Mammary epithelial cell (primary cell): ENCODE measurements at regions of chrX and their contacts with region 1.

Region 1: DNA sequence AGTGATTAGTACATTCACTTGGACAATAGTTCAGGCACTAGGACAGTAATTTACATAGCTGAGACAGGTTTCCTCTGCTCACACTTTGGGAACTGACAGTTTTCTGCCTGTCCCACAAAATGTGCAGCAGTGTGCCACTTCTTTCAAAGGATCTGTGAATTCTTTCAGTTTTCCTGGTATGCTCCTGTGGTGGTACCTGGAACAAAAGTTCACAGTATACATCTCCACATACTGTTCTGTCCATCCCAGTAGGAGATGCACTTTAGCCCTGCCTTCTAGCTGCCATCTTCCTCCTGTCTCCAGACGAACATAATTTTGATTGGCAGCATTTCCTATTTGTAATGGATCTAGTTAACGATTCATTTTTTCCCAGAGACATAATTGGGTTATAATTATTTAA is 360.8 kb upstream of the CXorf51B start:
- DNase-seq: no peak
- H3K4me3 ChIP-seq: no peak overlapping the region
- H3K27ac ChIP-seq: no peak overlapping the region
- H3K4me1 ChIP-seq: no peaks in the 10 kb centered on the region
- H3K27me3 ChIP-seq: no peaks in the 10 kb centered on the region
- CTCF ChIP-seq: no peak

Region 2: GRCh38 chrX:144681501-144681900 is 1767.3 kb before region 1 on chrX:
- CTCF ChIA-PET with region 1: interaction called, 13 read pairs
- dilution Hi-C with region 1: no loop called
- in situ Hi-C with region 1: no loop called
- intact Hi-C with region 1: no loop called
- DNase-seq: peak; percentile 69
- H3K4me3 ChIP-seq: no peak overlapping the region
- H3K27ac ChIP-seq: no peak overlapping the region
- H3K4me1 ChIP-seq: no peaks in the 10 kb centered on the region
- H3K27me3 ChIP-seq: no peaks in the 10 kb centered on the region
- CTCF ChIP-seq: no peak